ENCODE measurements at regions of chr1 and their contacts with region 1.

Region 1: GRCh38 chr1:6523566-6523965 is 30.7 kb downstream of the NOL9 start:
- DNase-seq: peak; percentile 47
- H3K4me3 ChIP-seq: no peak overlapping the region
- H3K27ac ChIP-seq: no peak overlapping the region
- H3K4me1 ChIP-seq: no peaks in the 10 kb centered on the region
- H3K27me3 ChIP-seq: no peaks in the 10 kb centered on the region
- CTCF ChIP-seq: peak; percentile 58 to 59
- POLR2A ChIP-seq: no peak

Region 2: GRCh38 chr1:6059866-6060265 is 463.7 kb before region 1 on chr1:
- CTCF ChIA-PET with region 1: no interaction called
- POLR2A ChIA-PET with region 1: no interaction called
- dilution Hi-C with region 1: no loop called
- intact Hi-C with region 1: no loop called
- DNase-seq: no peak
- H3K4me3 ChIP-seq: no peak overlapping the region
- H3K27ac ChIP-seq: no peak overlapping the region
- H3K4me1 ChIP-seq: peaks cover 10% of the 10 kb centered on the region
- H3K27me3 ChIP-seq: no peaks in the 10 kb centered on the region
- CTCF ChIP-seq: no peak
- POLR2A ChIP-seq: no peak

Region 3: GRCh38 chr1:6385488-6386191 is 137.9 kb before region 1 on chr1:
- CTCF ChIA-PET with region 1: no interaction called
- POLR2A ChIA-PET with region 1: no interaction called
- dilution Hi-C with region 1: no loop called
- intact Hi-C with region 1: no loop called
- DNase-seq: peak; percentile 48
- H3K4me3 ChIP-seq: no peak overlapping the region
- H3K27ac ChIP-seq: peak overlapping the region; percentile 62
- H3K4me1 ChIP-seq: peaks cover 12% of the 10 kb centered on the region
- H3K27me3 ChIP-seq: no peaks in the 10 kb centered on the region
- CTCF ChIP-seq: no peak
- POLR2A ChIP-seq: no peak

Region 4: GRCh38 chr1:6456800-6457466 is 66.6 kb before region 1 on chr1:
- CTCF ChIA-PET with region 1: no interaction called
- POLR2A ChIA-PET with region 1: no interaction called
- dilution Hi-C with region 1: no loop called
- intact Hi-C with region 1: no loop called
- DNase-seq: no peak
- H3K4me3 ChIP-seq: no peak overlapping the region
- H3K27ac ChIP-seq: no peak overlapping the region
- H3K4me1 ChIP-seq: no peaks in the 10 kb centered on the region
- H3K27me3 ChIP-seq: peaks cover 26 to 30% of the 10 kb centered on the region in 2 experiments
- CTCF ChIP-seq: no peak
- POLR2A ChIP-seq: no peak

Region 5: GRCh38 chr1:6502000-6502891 is 21.3 kb before region 1 on chr1:
- CTCF ChIA-PET with region 1: interaction called, 28 read pairs
- POLR2A ChIA-PET with region 1: no interaction called
- dilution Hi-C with region 1: no loop called
- intact Hi-C with region 1: no loop called
- DNase-seq: peak; percentile 45
- H3K4me3 ChIP-seq: no peak overlapping the region
- H3K27ac ChIP-seq: no peak overlapping the region
- H3K4me1 ChIP-seq: peaks cover 3% of the 10 kb centered on the region
- H3K27me3 ChIP-seq: no peaks in the 10 kb centered on the region
- CTCF ChIP-seq: no peak
- POLR2A ChIP-seq: no peak

Region 6: DNA sequence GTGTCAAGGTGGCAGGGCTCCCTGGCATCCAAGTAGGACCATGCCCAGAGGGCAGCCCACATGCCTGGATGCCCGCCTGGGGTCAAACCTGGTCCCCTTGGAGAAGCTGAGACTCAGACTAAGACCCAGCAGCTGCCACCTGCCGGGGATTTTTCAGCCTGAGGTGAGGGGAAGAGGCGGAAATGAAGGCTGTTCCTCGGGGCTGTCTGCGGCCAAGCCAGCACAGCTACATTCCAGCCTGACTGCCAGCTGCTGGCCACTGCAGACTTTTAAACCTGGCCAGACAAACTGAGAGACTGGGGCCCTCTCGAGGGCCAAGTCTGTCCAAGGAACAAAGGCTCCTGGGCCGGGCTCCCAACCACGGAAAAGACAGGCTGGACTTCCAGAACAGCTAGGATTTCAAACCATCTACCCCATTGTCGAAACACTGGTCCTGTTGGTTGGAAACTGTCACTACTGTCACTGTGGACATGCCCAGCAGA is 10.2 kb before region 1 on chr1:
- CTCF ChIA-PET with region 1: interaction called, 32 read pairs
- POLR2A ChIA-PET with region 1: no interaction called
- dilution Hi-C with region 1: no loop called
- intact Hi-C with region 1: no loop called
- DNase-seq: no peak
- H3K4me3 ChIP-seq: no peak overlapping the region
- H3K27ac ChIP-seq: no peak overlapping the region
- H3K4me1 ChIP-seq: no peaks in the 10 kb centered on the region
- H3K27me3 ChIP-seq: no peaks in the 10 kb centered on the region
- CTCF ChIP-seq: no peak
- POLR2A ChIP-seq: no peak

Region 7: DNA sequence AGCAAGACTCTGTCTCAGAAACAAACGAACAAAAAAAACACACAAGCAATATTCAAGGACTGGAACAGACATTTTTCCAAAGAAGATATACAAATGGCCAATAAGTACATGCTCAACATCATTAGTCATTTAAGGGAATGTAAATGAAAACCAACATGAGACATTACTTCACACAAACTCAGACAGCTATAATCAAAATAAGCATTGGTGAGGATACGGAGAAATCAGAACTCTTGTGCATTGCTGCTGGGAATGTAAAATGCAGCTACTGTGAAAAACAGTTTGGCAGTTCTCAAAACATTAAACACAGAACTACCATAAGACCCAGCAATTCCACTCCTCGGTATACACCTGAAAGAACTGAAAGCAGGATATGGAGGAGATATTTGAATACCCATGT is 15.4 kb after region 1 on chr1:
- CTCF ChIA-PET with region 1: interaction called, 37 read pairs
- POLR2A ChIA-PET with region 1: no interaction called
- dilution Hi-C with region 1: no loop called
- intact Hi-C with region 1: no loop called
- DNase-seq: no peak
- H3K4me3 ChIP-seq: no peak overlapping the region
- H3K27ac ChIP-seq: no peak overlapping the region
- H3K4me1 ChIP-seq: no peaks in the 10 kb centered on the region
- H3K27me3 ChIP-seq: no peaks in the 10 kb centered on the region
- CTCF ChIP-seq: no peak
- POLR2A ChIP-seq: no peak

Region 8: DNA sequence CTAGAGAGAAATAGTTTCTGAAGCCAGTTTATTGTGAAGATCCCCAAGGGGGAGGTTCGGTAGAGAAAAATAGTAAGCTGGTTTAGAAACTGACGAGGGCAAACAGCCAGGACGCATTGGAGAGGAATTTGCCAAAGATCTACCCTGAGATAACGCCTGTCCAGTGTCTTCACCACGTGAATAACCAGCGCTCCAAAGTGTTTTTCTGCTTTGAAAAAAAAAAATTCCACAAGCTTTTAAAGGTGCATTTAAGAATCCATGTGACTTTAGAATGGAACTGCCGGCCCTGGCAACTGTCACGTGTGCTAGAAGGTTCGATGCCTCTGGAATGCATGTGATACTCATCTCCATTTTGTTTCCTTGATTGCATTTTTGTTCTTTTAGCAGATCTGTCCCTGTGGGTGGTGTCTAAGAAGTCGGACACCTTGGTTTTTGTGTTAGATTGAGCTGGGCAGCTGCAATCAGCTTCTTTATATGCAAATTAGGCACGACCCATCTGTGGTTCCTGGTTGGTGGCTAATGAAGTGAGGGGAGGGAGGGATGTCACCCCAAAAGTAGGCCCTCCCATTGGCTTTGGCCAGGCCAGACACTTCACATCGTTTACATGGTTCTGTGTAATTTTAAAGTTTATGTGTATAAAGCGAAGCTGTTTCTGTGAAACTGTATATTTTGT is 99.9 kb after region 1 on chr1:
- CTCF ChIA-PET with region 1: no interaction called
- POLR2A ChIA-PET with region 1: no interaction called
- dilution Hi-C with region 1: no loop called
- intact Hi-C with region 1: no loop called
- DNase-seq: no peak
- H3K4me3 ChIP-seq: no peak overlapping the region
- H3K27ac ChIP-seq: no peak overlapping the region
- H3K4me1 ChIP-seq: peaks cover 4% of the 10 kb centered on the region
- H3K27me3 ChIP-seq: no peaks in the 10 kb centered on the region
- CTCF ChIP-seq: no peak
- POLR2A ChIP-seq: no peak